AG04449 (cell line): ENCODE measurements at regions of chr11 and their contacts with region 1.

Region 1: DNA sequence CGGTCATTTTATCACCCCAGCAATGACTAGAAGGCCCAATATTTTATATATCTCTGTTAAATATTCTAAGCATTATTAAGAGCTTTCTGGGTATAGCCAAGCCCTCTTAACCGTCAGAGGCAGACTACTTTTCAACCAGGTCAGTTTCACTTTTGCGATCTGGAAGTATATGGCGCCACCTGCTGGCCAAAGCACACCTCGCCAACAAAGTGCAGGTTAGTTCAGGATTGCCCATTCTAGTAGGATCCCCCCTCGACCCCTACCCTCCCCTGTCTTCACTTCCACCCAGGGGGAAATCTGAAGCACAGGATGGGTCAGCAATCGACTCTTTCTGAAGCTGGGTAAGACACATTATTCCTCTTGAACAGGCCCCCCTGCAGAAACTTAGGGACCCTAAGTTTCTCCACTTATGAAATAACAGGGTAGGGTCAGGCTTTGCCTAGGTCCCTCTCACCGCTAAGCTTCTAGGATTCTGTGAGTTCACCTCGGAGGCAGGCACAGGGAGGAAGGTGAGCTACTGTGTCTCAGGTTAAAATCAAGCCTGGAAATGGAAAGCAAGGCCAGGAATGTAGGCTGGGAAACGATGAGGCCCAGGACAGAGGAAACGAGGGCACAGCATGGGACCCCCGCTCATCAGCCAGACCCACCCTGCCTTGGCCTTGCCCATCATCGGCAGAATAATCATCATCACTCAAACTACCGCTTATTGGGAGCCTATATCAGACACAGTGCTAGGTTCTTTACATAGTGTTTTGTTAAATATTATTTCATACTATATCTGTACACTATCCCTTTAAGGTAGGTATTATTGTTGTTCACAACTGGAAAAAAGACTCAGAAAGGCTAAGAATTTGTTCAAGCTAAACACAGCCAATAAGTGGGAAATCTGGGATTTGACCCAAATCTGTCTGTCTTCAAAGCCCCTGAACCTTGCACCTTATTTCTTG is 35.6 kb downstream of the KCNJ1 start:
- DNase-seq: peak; percentile 42
- H3K4me3 ChIP-seq: no peak overlapping the region
- CTCF ChIP-seq: peak; percentile 82

Region 2: GRCh38 chr11:128279866-128280265 is 551.6 kb before region 1 on chr11:
- CTCF ChIA-PET with region 1: interaction called, 14 read pairs
- POLR2A ChIA-PET with region 1: no interaction called
- DNase-seq: peak; percentile 34
- H3K4me3 ChIP-seq: no peak overlapping the region
- CTCF ChIP-seq: no peak

Region 3: GRCh38 chr11:128630367-128631230 is 200.8 kb before region 1 on chr11:
- CTCF ChIA-PET with region 1: interaction called, 181 read pairs
- POLR2A ChIA-PET with region 1: no interaction called
- DNase-seq: peak; percentile 31
- H3K4me3 ChIP-seq: no peak overlapping the region
- CTCF ChIP-seq: peak; percentile 66

Region 4: GRCh38 chr11:128669506-128670270 is 161.8 kb before region 1 on chr11:
- CTCF ChIA-PET with region 1: interaction called, 11 read pairs
- POLR2A ChIA-PET with region 1: no interaction called
- DNase-seq: no peak
- H3K4me3 ChIP-seq: no peak overlapping the region
- CTCF ChIP-seq: no peak

Region 5: DNA sequence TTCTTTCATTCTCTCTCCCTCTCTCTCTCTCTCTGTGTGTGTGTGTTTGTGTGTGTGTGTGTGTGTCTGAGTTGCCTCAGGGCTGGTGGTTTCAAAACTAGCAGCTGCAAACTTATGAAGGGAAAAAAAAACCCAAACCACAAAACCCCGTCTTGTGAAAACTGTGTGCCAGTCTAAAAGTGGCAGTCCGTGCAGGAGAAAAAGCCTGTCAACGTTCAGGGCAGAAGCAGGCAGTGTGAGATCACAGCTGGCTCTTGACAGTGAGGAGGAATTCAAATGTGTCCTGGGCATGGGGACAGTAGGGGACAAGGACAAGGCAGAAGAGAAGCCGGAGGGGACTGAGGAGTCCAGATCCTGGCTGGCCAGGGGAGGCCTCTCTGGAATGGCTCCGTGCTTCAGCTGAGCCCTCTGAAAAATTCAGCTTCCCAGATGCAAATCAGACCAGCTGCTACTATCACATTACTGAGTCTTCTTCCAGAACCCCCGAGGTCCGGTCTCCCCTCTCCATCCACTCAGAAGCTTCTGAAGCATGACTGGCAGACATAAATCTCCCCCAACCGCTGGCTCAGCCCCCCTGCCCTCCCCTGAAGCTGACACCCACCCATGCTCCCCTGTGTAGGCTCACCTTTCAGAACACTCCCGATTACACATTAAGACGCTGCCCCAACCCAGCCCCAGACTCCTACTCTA is 105.7 kb before region 1 on chr11:
- CTCF ChIA-PET with region 1: no interaction called
- POLR2A ChIA-PET with region 1: no interaction called
- DNase-seq: peak; percentile 60
- H3K4me3 ChIP-seq: no peak overlapping the region
- CTCF ChIP-seq: no peak

Region 6: GRCh38 chr11:128776424-128777284 is 54.8 kb before region 1 on chr11:
- CTCF ChIA-PET with region 1: interaction called, 12 read pairs
- POLR2A ChIA-PET with region 1: no interaction called
- DNase-seq: no peak
- H3K4me3 ChIP-seq: no peak overlapping the region
- CTCF ChIP-seq: peak; percentile 36

Region 7: GRCh38 chr11:128848815-128849455 is 17.5 kb after region 1 on chr11:
- CTCF ChIA-PET with region 1: interaction called, 35 read pairs
- POLR2A ChIA-PET with region 1: no interaction called
- DNase-seq: no peak
- H3K4me3 ChIP-seq: no peak overlapping the region
- CTCF ChIP-seq: peak; percentile 76

Region 8: GRCh38 chr11:129077191-129077590 is 245.7 kb after region 1 on chr11:
- CTCF ChIA-PET with region 1: no interaction called
- POLR2A ChIA-PET with region 1: no interaction called
- DNase-seq: no peak
- H3K4me3 ChIP-seq: no peak overlapping the region
- CTCF ChIP-seq: no peak